ENCODE measurements at regions of chr5 and their contacts with region 1.

Region 1: GRCh38 chr5:149834246-149834855 is 104.2 kb downstream of the PPARGC1B start:
- DNase-seq: peak; percentile 91
- ATAC-seq: peak; percentile 79
- H3K4me3 ChIP-seq: no peak overlapping the region
- H3K27ac ChIP-seq: no peak overlapping the region
- H3K4me1 ChIP-seq: no peaks in the 10 kb centered on the region
- H3K27me3 ChIP-seq: peaks cover 7% of the 10 kb centered on the region; the same call in 1 of the 2 replicates
- CTCF ChIP-seq: peak; percentile 80
- POLR2A ChIP-seq: no peak
- RAD21 ChIP-seq: peak; percentile 86

Region 2: DNA sequence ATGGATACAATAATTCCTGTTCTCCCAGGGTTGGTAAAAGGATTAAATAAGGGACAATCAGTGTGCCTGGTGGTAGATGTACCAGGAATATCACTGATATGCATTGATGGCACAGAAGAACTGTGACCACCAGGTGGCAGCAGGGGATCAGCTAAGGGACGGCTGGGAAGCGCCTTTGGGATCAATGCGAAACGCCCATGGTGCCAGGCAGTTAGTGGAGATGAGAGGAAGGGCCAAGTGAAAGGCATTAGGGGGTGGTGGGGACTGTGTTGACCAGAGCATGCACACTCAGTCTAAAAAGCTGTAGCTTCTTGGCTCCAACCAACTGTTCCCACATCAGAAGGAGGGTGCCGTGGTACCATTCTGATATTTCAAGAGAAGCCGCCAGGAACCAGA is 197.5 kb before region 1 on chr5:
- CTCF ChIA-PET with region 1: interaction called, 10 read pairs
- POLR2A ChIA-PET with region 1: no interaction called
- dilution Hi-C with region 1: loop called (anchors 10 kb)
- in situ Hi-C with region 1: loop called (anchors 5 kb)
- intact Hi-C with region 1: no loop called
- DNase-seq: peak; percentile 62
- ATAC-seq: peak; percentile 83
- H3K4me3 ChIP-seq: no peak overlapping the region
- H3K27ac ChIP-seq: no peak overlapping the region
- H3K4me1 ChIP-seq: peaks cover 9% of the 10 kb centered on the region
- H3K27me3 ChIP-seq: peaks cover 9% of the 10 kb centered on the region; the same call in 1 of the 2 replicates
- CTCF ChIP-seq: peak; percentile 80
- POLR2A ChIP-seq: no peak
- RAD21 ChIP-seq: peak; percentile 92

Region 3: GRCh38 chr5:149960272-149961185 is 126.2 kb after region 1 on chr5 and contains the start of gene SLC26A2:
- CTCF ChIA-PET with region 1: interaction called, 23 read pairs
- POLR2A ChIA-PET with region 1: interaction called, 7 read pairs
- dilution Hi-C with region 1: no loop called
- in situ Hi-C with region 1: no loop called
- intact Hi-C with region 1: loop called (anchors 1 kb)
- DNase-seq: peak; percentile 97
- ATAC-seq: peak; percentile 100
- H3K4me3 ChIP-seq: peak within 1 kb of the TSS; percentile 87
- H3K27ac ChIP-seq: peak within 1 kb of the TSS; percentile 70
- H3K4me1 ChIP-seq: peaks cover 6% of the 10 kb centered on the region
- H3K27me3 ChIP-seq: no peaks in the 10 kb centered on the region
- CTCF ChIP-seq: no peak
- POLR2A ChIP-seq: peak; percentile 89
- RAD21 ChIP-seq: no peak
- total RNA-seq, gene SLC26A2: 9.9 and 12.8 TPM in 2 replicates

Region 4: DNA sequence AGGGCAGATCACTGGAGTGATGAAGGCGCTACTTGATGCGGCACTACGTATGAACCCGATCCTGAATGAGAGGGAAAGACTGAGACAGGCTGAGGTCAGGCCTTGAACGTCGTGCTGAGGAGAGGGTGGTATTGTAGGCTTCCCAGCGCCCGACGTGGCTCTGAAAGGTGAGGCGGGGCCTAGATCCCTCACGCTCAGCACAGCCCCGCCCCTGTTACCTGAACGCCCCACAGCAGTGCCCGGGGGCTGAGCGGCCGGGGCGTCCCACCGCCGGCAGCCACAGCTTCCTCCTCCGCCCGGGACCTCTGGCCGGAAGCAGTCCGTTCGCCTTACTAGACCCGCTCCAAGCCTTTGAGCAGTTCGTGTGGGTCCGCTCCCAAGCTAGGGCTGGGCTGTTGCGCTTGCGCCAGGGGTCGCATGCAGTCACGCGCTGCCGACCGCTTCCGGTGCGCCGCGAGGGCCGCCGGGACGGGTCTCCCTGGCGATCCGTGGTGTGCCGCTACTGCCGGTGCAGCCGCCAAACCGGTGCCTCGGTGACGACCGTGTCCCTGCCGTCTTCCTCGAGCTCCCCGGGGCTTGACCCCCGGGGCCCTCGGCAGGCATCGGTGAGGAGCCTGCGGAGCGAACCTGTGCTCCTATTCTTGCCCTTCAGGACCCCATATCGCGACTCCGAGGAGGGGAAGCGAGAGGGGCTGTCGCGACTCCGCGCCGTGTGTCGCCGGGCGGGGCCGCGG is 166.1 kb after region 1 on chr5 and contains the starts of genes HMGXB3 and TIGD6:
- CTCF ChIA-PET with region 1: interaction called, 10 read pairs
- POLR2A ChIA-PET with region 1: no interaction called
- dilution Hi-C with region 1: no loop called
- in situ Hi-C with region 1: no loop called
- intact Hi-C with region 1: no loop called
- DNase-seq: peak; percentile 95
- ATAC-seq: peak; percentile 88
- H3K4me3 ChIP-seq: peak within 1 kb of the TSS; percentile 62
- H3K27ac ChIP-seq: peak within 1 kb of the TSS; percentile 75
- H3K4me1 ChIP-seq: no peaks in the 10 kb centered on the region; the same call in 1 of the 2 replicates
- H3K27me3 ChIP-seq: no peaks in the 10 kb centered on the region
- CTCF ChIP-seq: no peak
- POLR2A ChIP-seq: peak; percentile 92
- RAD21 ChIP-seq: no peak; the same call in 1 of the 2 replicates
- total RNA-seq, gene HMGXB3: 27.6 and 29.2 TPM in 2 replicates
- total RNA-seq, gene TIGD6: 6.1 and 6.6 TPM in 2 replicates

Region 5: DNA sequence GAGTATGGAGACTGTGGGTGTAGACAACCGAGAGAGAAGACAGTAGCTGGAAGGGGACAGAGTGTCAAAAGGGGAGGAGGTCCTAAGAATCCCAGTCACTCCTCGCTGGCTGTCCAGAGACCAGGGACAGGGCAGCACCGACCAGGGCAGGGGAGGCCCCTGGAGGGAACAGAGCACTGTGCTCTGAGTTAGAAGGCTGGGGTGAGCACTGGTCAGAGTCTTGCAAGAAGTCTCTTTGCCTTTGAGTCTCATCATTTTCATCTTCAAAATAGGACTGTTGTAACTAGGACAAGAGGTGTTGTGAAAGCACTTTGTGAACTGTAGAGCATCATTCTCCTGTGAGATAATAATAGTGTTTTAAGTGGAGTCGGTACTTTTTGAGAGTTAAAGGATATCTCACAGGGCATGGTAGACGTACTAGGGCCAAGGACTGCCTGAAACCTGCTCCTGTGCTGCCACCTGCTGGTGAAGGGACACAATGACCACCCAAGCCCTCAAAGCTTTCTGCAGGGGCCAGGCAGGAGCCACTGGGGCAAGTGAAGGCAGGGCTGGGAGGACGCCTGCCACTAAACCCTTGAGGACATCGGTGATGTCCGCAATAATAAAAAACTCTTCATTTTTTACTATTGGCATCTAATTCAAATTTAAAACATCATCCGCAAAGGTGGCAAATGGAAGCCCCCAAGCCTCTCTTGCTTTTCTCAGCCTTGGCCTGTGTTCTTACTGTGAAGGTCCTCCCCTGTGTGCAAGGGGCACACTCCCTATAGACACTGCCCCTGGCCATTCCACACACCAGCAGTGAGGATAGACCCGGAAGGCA is 383.7 kb after region 1 on chr5:
- CTCF ChIA-PET with region 1: interaction called, 3 read pairs
- POLR2A ChIA-PET with region 1: no interaction called
- dilution Hi-C with region 1: no loop called
- in situ Hi-C with region 1: loop called (anchors 10 kb)
- intact Hi-C with region 1: loop called (anchors 2 kb)
- DNase-seq: peak; percentile 79
- ATAC-seq: peak; percentile 96
- H3K4me3 ChIP-seq: no peak overlapping the region
- H3K27ac ChIP-seq: no peak overlapping the region
- H3K4me1 ChIP-seq: no peaks in the 10 kb centered on the region
- H3K27me3 ChIP-seq: no peaks in the 10 kb centered on the region; the same call in 1 of the 2 replicates
- CTCF ChIP-seq: peak; percentile 92
- POLR2A ChIP-seq: no peak
- RAD21 ChIP-seq: peak; percentile 96

Region 6: GRCh38 chr5:150589871-150590601 is 755.7 kb after region 1 on chr5:
- CTCF ChIA-PET with region 1: no interaction called
- POLR2A ChIA-PET with region 1: no interaction called
- dilution Hi-C with region 1: no loop called
- in situ Hi-C with region 1: no loop called
- intact Hi-C with region 1: no loop called
- DNase-seq: peak; percentile 62
- ATAC-seq: peak; percentile 80
- H3K4me3 ChIP-seq: no peak overlapping the region
- H3K27ac ChIP-seq: no peak overlapping the region
- H3K4me1 ChIP-seq: peaks cover 16% of the 10 kb centered on the region; the same call in 1 of the 2 replicates
- H3K27me3 ChIP-seq: peaks cover 7% of the 10 kb centered on the region
- CTCF ChIP-seq: peak; percentile 50
- POLR2A ChIP-seq: no peak
- RAD21 ChIP-seq: peak; percentile 62